Posterior vena cava (tissue), 2 donors: ENCODE measurements at regions of chr2 and their contacts with region 1.

Region 1: DNA sequence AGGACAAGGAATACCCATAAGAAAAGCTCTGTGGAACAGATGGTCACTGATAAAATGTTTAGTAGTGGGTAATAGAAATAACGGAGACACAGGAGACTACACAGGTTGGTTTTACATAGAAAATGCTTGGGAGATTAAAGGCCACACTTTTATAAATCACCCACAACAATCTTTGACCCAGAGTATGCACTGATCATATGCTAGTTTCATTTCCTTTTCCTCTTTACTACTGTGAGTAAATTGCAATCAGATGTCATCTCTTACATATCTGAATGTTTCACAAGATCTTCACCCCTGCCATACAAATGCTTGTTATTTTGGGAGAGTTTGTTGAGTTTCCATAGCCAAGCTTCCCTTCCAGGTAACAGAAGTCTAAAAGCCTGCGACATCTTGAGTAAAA is 978.4 kb upstream of the KLHL29 start:
- DNase-seq: no peak

Region 2: GRCh38 chr2:21256006-21256405 is 1150.6 kb before region 1 on chr2:
- intact Hi-C with region 1: loop called in 1 of 2 experiments (anchors 5 kb)
- DNase-seq: no peak

Region 3: GRCh38 chr2:22360735-22361374 is 45.8 kb before region 1 on chr2:
- intact Hi-C with region 1: no loop called
- DNase-seq: no peak

Region 4: DNA sequence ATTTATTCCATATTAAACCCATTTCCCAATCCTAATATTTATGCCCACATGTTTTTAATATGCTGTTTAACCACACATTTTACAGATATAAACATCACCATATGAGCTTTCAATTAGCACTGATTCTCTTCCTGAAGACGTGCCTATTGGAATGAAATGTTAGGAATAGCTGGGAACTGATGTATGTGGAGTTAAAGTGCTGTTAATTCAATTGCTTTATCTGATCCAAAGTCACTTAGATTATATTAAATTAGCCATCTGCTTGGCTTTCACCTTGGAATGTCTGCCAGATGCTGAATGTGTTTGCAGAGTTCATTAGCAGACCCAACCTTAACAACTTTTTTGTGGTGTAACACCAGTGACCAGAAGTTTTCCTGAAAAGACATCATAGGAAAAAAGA is 35.4 kb after region 1 on chr2:
- intact Hi-C with region 1: no loop called
- DNase-seq: no peak

Region 5: DNA sequence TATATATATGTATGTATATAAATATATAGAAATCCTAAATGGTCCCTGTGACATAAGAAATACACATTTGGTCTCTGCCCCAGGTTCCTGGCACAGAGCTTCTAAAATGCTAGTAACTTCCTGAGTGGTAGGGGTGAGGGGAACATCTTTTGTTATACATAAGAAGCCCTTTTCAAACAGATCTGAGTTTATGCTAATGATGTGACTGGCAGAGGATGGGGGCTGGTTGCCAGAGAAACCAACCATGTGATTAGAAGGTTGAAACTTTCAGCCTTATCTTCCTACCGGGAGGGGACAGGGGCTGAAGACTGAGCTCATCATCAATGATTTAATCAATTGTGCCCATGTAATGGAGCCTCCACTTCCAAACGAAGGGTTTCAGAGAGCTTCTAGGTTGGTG is 1619.6 kb after region 1 on chr2:
- intact Hi-C with region 1: no loop called
- DNase-seq: no peak